ENCODE measurements at regions of chr5 and their contacts with region 1.

Region 1: DNA sequence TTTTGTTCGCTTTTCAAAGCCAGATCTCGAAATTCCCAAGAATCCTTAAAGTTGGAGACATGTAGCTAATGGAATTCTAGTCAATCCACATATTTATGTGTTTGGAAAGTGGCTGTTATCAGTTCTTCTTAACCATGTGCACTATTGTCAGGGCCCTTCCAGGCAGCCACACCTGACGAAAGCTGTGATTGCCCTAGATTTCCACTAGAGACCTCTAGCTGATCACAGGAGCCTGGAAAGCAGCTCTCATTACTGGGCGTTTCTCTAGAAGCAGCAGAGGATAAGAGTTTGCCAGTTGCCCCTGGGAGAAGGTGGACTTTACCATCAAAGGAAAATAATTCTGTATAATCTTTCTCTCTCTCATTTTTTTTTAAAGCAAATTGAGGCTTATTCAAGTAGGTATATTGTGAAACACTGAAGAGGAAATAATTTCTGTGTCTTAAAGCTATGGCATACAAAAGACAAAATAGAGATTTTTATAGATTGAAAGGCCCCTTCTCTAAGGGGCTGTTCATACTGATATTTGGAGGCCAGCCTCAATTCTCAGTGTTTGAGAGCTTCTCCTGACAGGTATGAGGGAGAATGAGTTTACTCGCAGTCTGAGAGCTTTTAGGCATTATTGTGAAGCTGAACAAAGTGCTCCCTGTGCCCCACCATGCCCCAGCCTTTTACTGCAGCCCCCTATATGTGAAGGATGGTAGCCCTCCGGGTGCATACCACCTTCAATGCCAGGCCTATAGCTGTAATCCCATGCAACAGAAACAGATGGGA is 405.4 kb upstream of the ACTBL2 start:
- DNase-seq: peak; percentile 72
- H3K4me3 ChIP-seq: no peak overlapping the region
- H3K27ac ChIP-seq: peak overlapping the region; percentile 75
- H3K4me1 ChIP-seq: peaks cover 30% of the 10 kb centered on the region
- H3K27me3 ChIP-seq: no peaks in the 10 kb centered on the region
- CTCF ChIP-seq: peak; percentile 85 to 88

Region 2: GRCh38 chr5:57468481-57469163 is 419.4 kb before region 1 on chr5:
- CTCF ChIA-PET with region 1: no interaction called
- dilution Hi-C with region 1: no loop called
- in situ Hi-C with region 1: no loop called
- intact Hi-C with region 1: no loop called
- DNase-seq: peak; percentile 57
- H3K4me3 ChIP-seq: no peak overlapping the region
- H3K27ac ChIP-seq: no peak overlapping the region
- H3K4me1 ChIP-seq: no peaks in the 10 kb centered on the region
- H3K27me3 ChIP-seq: no peaks in the 10 kb centered on the region
- CTCF ChIP-seq: no peak

Region 3: DNA sequence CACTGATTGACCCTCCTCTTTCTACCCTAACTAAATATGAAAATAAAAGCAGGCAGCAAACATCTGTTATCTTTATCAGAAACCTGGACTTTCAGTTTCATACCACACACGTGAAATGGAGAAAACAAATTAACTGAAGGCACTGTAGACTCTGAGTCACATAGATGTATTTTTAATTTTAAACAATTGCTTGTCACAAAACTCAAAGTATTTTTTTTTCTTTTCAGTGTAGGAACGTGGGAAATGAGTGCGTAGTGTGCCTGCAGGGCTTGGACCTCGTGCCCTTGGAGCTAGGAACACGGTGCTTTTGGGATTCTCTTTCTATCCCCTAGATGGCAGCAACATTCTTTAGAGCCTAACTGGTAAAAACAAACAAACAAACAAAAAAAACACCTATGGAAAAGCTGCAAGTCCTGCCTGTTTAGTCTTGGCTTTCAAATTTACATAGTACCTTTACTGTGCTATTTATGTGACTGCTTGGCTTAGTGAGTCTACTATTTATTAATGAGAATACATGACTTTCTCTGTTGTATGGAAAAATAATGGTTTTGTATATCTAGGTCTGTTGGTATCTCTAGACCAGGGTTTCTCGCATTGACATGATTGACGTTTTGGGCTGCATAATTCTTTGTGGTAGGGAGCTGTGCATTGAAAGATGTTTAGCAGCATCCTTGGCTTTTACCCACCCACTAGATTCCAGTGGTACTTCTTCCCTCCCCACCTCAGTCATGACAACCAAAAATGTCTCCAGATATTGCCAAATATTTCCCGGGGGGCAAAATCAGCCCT is 388.6 kb before region 1 on chr5:
- CTCF ChIA-PET with region 1: interaction called, 13 read pairs
- dilution Hi-C with region 1: no loop called
- in situ Hi-C with region 1: no loop called
- intact Hi-C with region 1: loop called (anchors 1 kb)
- DNase-seq: peak; percentile 63
- H3K4me3 ChIP-seq: peak overlapping the region in 2 of 3 experiments; percentile 36 to 39
- H3K27ac ChIP-seq: no peak overlapping the region
- H3K4me1 ChIP-seq: peaks cover 24% of the 10 kb centered on the region
- H3K27me3 ChIP-seq: no peaks in the 10 kb centered on the region
- CTCF ChIP-seq: peak; percentile 87 to 89

Region 4: DNA sequence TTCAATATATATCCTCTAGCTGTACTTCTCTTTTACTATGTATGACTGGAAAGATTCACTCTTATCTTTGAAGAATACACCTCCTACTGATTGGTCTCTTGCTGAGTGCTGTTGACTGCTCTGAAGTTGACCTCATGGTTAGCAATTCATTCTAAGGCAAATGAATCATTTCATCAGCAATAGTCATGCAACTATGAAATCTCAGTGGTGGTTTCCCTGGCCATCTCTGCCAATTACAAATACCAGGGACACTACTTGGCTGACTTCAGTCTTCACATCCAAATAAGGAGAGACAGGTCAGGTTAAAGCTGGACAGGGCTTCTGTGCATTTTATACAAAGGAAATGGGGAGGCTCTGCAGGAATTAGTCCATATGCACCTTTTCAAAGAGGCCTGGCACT is 71.9 kb before region 1 on chr5:
- CTCF ChIA-PET with region 1: no interaction called
- dilution Hi-C with region 1: no loop called
- in situ Hi-C with region 1: no loop called
- intact Hi-C with region 1: loop called (anchors 2 kb)
- DNase-seq: peak; percentile 97
- H3K4me3 ChIP-seq: no peak overlapping the region
- H3K27ac ChIP-seq: peak overlapping the region; percentile 86
- H3K4me1 ChIP-seq: peaks cover 24% of the 10 kb centered on the region
- H3K27me3 ChIP-seq: no peaks in the 10 kb centered on the region
- CTCF ChIP-seq: no peak

Region 5: GRCh38 chr5:57841676-57842363 is 46.2 kb before region 1 on chr5:
- CTCF ChIA-PET with region 1: no interaction called
- dilution Hi-C with region 1: no loop called
- in situ Hi-C with region 1: no loop called
- intact Hi-C with region 1: loop called (anchors 1 kb)
- DNase-seq: peak; percentile 99
- H3K4me3 ChIP-seq: no peak overlapping the region
- H3K27ac ChIP-seq: peak overlapping the region; percentile 99
- H3K4me1 ChIP-seq: peaks cover 60% of the 10 kb centered on the region
- H3K27me3 ChIP-seq: no peaks in the 10 kb centered on the region
- CTCF ChIP-seq: no peak

Region 6: DNA sequence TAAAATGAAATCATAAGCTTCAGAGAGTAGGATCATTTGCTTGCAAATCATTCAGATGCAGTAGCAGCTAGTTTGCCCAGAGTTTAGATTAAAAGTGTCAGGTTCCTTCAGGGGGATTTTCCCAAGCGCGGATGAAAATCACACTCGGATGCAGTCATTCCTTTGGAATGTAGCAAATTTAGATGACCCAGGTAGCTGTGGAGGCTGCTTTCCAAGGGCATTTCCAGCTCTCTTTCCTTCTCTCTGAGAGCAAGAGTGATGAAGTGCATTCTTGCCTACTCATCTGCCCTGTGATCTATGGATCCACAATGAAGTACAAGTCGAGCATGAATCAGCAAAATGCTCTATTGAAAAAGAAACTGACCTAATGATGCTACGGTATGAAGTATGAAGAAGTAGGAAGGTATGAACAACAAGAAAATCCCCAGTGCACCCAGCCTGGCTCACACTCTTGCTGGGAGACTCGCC is 371.7 kb after region 1 on chr5:
- CTCF ChIA-PET with region 1: no interaction called
- dilution Hi-C with region 1: no loop called
- in situ Hi-C with region 1: no loop called
- intact Hi-C with region 1: loop called (anchors 1 kb)
- DNase-seq: peak; percentile 99
- H3K4me3 ChIP-seq: peak overlapping the region in 2 of 3 experiments; percentile 7 to 22
- H3K27ac ChIP-seq: peak overlapping the region; percentile 90
- H3K4me1 ChIP-seq: peaks cover 28% of the 10 kb centered on the region
- H3K27me3 ChIP-seq: no peaks in the 10 kb centered on the region
- CTCF ChIP-seq: no peak

Region 7: DNA sequence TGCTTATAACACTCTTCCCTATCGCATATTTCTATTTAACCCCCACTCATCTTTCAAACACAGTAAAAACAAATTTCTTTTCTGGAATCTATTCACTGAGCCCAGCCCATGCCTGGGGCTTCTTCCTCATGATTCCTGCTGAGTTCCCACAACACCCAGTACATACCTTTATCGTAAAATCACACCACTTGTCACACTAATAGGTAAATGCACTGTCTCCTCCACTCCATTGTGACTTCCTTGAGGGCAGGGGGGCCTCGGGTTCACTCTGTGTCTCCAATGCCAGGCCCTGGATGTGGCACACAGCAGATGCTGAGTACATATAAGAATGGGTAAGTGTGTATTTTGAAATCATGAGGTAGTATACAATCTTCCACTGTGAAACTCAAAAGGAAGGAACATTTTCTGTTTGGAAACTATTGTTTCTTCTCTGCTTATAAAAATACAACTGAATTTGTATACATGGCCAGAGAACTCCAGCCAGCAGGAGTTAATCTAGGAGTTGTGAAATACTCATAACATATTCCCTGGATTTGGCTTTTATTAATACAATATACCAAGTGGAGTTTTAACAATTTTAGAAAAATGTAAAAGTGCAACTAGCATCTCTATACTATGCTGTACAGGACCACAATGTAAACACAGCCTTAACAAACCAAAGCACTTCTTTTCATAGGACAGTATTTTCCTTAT is 564.7 kb after region 1 on chr5:
- CTCF ChIA-PET with region 1: interaction called, 4 read pairs
- dilution Hi-C with region 1: loop called (anchors 25 kb)
- in situ Hi-C with region 1: loop called in 1 of 2 experiments (anchors 5 kb)
- intact Hi-C with region 1: no loop called
- DNase-seq: no peak
- H3K4me3 ChIP-seq: no peak overlapping the region
- H3K27ac ChIP-seq: peak overlapping the region; percentile 35
- H3K4me1 ChIP-seq: peaks cover 32% of the 10 kb centered on the region
- H3K27me3 ChIP-seq: no peaks in the 10 kb centered on the region
- CTCF ChIP-seq: no peak

Measured in mammary epithelial cell (primary cell).